Right cardiac atrium (tissue), 5 donors: ENCODE measurements at regions of chr7 and their contacts with region 1.

Region 1: DNA sequence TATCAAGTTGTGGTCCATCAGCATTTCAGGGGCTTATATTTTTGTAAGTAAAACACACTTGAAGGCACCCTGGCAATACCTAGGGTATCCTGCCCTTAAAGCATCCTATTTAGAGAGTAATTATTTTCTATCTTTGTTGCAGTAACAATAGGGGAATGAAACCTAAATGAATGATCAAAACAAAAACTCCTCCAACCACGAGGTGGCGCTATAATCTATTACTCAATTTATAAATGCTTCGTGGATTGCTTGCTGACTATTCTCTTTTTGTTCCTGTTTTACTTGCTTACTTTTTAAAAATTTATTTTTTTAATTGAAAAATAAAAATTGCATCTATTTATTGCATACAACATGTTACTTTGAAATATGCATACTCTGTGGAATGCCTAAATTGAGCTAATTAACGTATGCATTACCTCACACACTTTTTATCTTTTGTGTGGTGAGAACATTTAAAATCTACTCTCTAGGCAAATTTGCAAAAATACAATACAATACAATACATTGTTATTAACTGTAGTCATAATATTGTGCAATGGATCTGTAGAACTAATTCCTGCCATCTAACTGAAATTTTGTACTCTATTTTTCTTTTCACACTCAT is 147.7 kb upstream of the BMPER start:
- DNase-seq: no peak
- ATAC-seq: no peak
- H3K4me3 ChIP-seq: no peak overlapping the region
- H3K27ac ChIP-seq: no peak overlapping the region
- H3K4me1 ChIP-seq: no peaks in the 10 kb centered on the region
- H3K27me3 ChIP-seq: no peaks in the 10 kb centered on the region

Region 2: GRCh38 chr7:33886149-33886623 is 128.5 kb after region 1 on chr7:
- intact Hi-C with region 1: loop called in 2 of 4 experiments (anchors 10 kb)
- DNase-seq: no peak
- ATAC-seq: no peak
- H3K4me3 ChIP-seq: no peak overlapping the region
- H3K27ac ChIP-seq: no peak overlapping the region
- H3K4me1 ChIP-seq: no peaks in the 10 kb centered on the region
- H3K27me3 ChIP-seq: no peaks in the 10 kb centered on the region

Region 3: GRCh38 chr7:33895025-33895804 is 137.6 kb after region 1 on chr7:
- intact Hi-C with region 1: loop called in 3 of 4 experiments (anchors 5 to 10 kb)
- DNase-seq: peak; percentile 82 to 96 (median 94)
- ATAC-seq: peak; percentile 93 to 95
- H3K4me3 ChIP-seq: no peak overlapping the region
- H3K27ac ChIP-seq: no peak overlapping the region
- H3K4me1 ChIP-seq: no peaks in the 10 kb centered on the region
- H3K27me3 ChIP-seq: no peaks in the 10 kb centered on the region